Activated CD8-positive, alpha-beta T cell treated with anti-CD3 and anti-CD28 coated beads, Interleukin-2, amount 10 ng/mL, durations not matched to agents 7 days and 5 days (primary cell): ENCODE measurements at regions of chr4 and their contacts with region 1.

Region 1: DNA sequence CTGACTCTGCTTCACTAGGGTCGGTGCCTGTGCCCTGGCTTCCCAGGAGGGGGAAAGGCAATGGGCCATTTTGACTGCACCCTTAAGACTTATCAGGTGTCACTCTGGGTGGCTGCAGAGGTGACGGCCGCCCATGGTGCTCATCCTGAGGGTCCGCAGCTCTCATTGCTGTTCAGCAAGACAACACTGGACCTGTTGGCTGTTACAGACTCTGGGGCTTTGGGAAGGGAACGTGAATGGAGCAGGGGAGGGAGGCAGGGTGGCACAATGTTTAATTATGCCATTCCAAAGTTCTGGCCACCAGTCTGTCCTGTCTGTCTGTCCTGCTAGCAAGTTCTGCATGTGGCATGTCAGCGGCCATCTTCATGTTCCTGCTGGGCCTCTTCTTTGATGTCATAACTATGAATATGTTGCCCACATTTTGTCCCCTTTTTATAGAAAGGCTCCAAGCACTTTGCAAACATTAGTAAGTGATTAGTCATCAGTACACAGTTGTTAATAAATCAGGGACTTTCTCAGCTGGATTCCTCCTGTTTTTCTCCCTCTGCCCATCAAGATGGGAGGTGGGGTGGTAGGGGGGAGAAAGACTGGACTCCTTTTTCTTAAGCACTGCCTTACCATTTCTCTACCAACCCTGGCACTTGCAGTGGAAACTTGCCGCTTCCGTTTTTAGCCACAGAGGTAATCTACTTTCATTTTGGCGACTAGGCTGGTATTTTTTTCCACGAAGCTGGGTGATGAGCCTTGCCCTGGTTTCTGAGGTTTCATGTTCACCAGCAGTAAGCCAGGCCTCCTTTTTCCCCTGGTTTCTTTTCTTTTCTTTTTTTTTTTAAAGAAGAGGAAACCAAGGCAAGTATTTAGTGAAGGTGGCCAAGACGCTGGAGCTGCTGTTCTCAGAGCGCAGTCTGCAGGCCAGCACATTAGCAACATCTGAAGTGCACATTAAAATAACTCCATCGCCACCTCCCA is 88.6 kb upstream of the TRIM2 start:
- DNase-seq: peak; percentile 88
- ATAC-seq: peak; percentile 76
- H3K4me3 Mint-ChIP-seq: peak overlapping the region; percentile 37
- H3K27ac Mint-ChIP-seq: no peak overlapping the region
- H3K4me1 Mint-ChIP-seq: peaks cover 6% of the 10 kb centered on the region
- H3K27me3 Mint-ChIP-seq: peaks cover 20% of the 10 kb centered on the region

Region 2: DNA sequence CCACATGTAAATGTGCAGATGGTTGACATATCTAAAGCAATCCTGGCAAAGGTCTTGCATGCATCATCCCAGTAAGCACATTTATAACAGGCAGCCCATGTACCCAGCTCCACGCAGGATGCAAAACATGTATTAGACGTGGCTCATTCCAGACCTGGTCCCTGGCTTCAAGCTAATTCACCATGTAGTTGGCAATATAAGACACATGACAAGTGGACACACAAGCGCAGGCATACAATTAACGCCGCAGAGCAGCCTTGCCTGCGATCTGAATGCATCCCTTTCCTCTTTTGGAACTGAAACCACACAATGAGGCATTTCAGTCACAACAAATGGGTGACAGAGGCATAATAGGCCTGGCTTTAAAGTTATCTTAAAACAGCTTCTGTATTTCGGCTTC is 25.9 kb before region 1 on chr4:
- CTCF ChIA-PET with region 1: interaction called, 82 read pairs
- POLR2A ChIA-PET with region 1: interaction called, 3 read pairs
- DNase-seq: no peak
- ATAC-seq: no peak
- H3K4me3 Mint-ChIP-seq: no peak overlapping the region
- H3K27ac Mint-ChIP-seq: no peak overlapping the region
- H3K4me1 Mint-ChIP-seq: peaks cover 12% of the 10 kb centered on the region
- H3K27me3 Mint-ChIP-seq: peaks cover 18% of the 10 kb centered on the region